HepG2 (cell line): ENCODE measurements at regions of chr12 and their contacts with region 1.

Region 1: DNA sequence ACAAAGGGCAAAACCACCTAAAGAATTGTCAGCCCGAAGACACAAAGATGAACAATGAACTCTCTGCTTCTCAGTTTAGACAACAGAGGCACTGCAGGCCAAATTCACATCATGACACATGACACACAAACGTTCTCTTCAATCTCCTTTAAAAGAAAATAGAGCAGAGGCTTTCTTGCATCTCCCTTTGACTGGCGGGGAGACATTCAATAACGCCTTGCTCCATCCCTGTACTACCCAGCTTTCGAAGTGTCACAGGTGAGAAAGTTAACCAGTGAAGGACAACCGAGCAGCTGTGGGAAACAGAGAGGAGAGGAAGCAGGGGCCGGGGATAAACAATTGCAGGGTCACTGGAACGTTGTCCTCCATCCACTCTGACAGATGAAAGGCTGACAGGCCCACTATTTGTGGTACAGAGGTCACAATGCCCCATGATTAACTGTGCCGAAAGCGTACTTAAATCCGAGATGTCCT is 130.8 kb downstream of the PHLDA1 start:
- DNase-seq: peak; percentile 94
- ATAC-seq: peak; percentile 100
- H3K4me3 ChIP-seq: peak overlapping the region in 2 of 3 experiments; percentile 1 to 37; a peak in 2 of 6 replicates
- H3K27ac ChIP-seq: peak overlapping the region; percentile 69
- H3K4me1 ChIP-seq: peaks cover 39% of the 10 kb centered on the region
- H3K27me3 ChIP-seq: no peaks in the 10 kb centered on the region
- CTCF ChIP-seq: no peak
- EP300 ChIP-seq: peak; percentile 10 to 90; a peak in 2 of 4 replicates
- POLR2A ChIP-seq: no peak
- RAD21 ChIP-seq: peak; percentile 29; the same call in 1 of the 2 replicates

Region 2: GRCh38 chr12:75868501-75868900 is 32.3 kb before region 1 on chr12:
- CTCF ChIA-PET with region 1: no interaction called
- POLR2A ChIA-PET with region 1: no interaction called
- in situ Hi-C with region 1: no loop called
- intact Hi-C with region 1: no loop called
- DNase-seq: no peak
- ATAC-seq: no peak
- H3K4me3 ChIP-seq: no peak overlapping the region
- H3K27ac ChIP-seq: no peak overlapping the region
- H3K4me1 ChIP-seq: peaks cover 24% of the 10 kb centered on the region
- H3K27me3 ChIP-seq: no peaks in the 10 kb centered on the region
- CTCF ChIP-seq: no peak
- EP300 ChIP-seq: no peak
- POLR2A ChIP-seq: no peak
- RAD21 ChIP-seq: no peak

Region 3: GRCh38 chr12:75939016-75939642 is 38.3 kb after region 1 on chr12:
- CTCF ChIA-PET with region 1: no interaction called
- POLR2A ChIA-PET with region 1: no interaction called
- in situ Hi-C with region 1: no loop called
- intact Hi-C with region 1: loop called (anchors 5 kb)
- DNase-seq: no peak
- ATAC-seq: no peak
- H3K4me3 ChIP-seq: no peak overlapping the region
- H3K27ac ChIP-seq: no peak overlapping the region
- H3K4me1 ChIP-seq: peaks cover 53% of the 10 kb centered on the region
- H3K27me3 ChIP-seq: no peaks in the 10 kb centered on the region
- CTCF ChIP-seq: no peak
- EP300 ChIP-seq: no peak
- POLR2A ChIP-seq: no peak
- RAD21 ChIP-seq: no peak

Region 4: GRCh38 chr12:76199808-76200207 is 299.0 kb after region 1 on chr12:
- CTCF ChIA-PET with region 1: no interaction called
- POLR2A ChIA-PET with region 1: no interaction called
- in situ Hi-C with region 1: no loop called
- intact Hi-C with region 1: no loop called
- DNase-seq: no peak
- ATAC-seq: no peak
- H3K4me3 ChIP-seq: no peak overlapping the region
- H3K27ac ChIP-seq: no peak overlapping the region
- H3K4me1 ChIP-seq: no peaks in the 10 kb centered on the region
- H3K27me3 ChIP-seq: no peaks in the 10 kb centered on the region; a peak in 1 of 5 replicates
- CTCF ChIP-seq: no peak
- EP300 ChIP-seq: no peak
- POLR2A ChIP-seq: no peak
- RAD21 ChIP-seq: no peak